Breast epithelium (tissue), 4 donors: ENCODE measurements at regions of chr15 and their contacts with region 1.

Region 1: GRCh38 chr15:72511536-72511935 is 37.4 kb downstream of the ARIH1 start:
- DNase-seq: no peak
- H3K4me3 ChIP-seq: no peak overlapping the region
- H3K27ac ChIP-seq: no peak overlapping the region
- H3K4me1 ChIP-seq: no peaks in the 10 kb centered on the region
- H3K27me3 ChIP-seq: no peaks in the 10 kb centered on the region
- CTCF ChIP-seq: no peak
- POLR2A ChIP-seq: no peak

Region 2: GRCh38 chr15:72481015-72481659 is 30.4 kb before region 1 on chr15:
- intact Hi-C with region 1: loop called (anchors 2 kb)
- DNase-seq: no peak
- H3K4me3 ChIP-seq: no peak overlapping the region
- H3K27ac ChIP-seq: no peak overlapping the region
- H3K4me1 ChIP-seq: peaks cover 6 to 24% of the 10 kb centered on the region in 2 donors
- H3K27me3 ChIP-seq: no peaks in the 10 kb centered on the region
- CTCF ChIP-seq: no peak
- POLR2A ChIP-seq: no peak